Caco-2 (cell line): ENCODE measurements at regions of chr6 and their contacts with region 1.

Region 1: GRCh38 chr6:44655412-44656342 is 268.2 kb downstream of the CDC5L start:
- DNase-seq: peak; percentile 70 to 80
- H3K4me3 ChIP-seq: no peak overlapping the region
- H3K4me3 Mint-ChIP-seq: peak overlapping the region; percentile 30
- H3K27ac Mint-ChIP-seq: peak overlapping the region; percentile 8
- H3K4me1 ChIP-seq: 0 out of 2 replicates have a peak, but pooled peaks cover 4% of the 10 kb centered on the region
- H3K4me1 Mint-ChIP-seq: peaks cover 15% of the 10 kb centered on the region
- H3K27me3 ChIP-seq: no peaks in the 10 kb centered on the region
- H3K27me3 Mint-ChIP-seq: peaks cover 4% of the 10 kb centered on the region
- CTCF ChIP-seq: peak; percentile 86 to 92

Region 2: DNA sequence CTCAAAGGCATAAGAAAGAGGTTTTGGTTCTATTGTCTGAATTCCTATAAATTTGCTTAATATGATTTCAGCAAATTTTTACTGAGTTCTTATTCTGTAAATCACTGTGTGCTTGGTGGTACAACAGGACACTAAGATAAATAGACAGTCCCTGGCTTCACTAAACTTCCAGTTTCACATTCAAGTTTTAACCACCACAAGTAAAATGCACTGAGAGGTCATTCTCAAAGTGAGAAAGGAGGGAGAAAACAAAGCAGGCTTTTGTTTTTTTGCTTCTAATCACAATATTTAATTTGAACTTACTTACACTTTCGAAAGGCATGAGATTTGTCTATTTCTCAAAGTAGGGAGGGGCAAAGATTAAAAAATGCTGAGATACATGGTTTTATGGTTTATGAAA is 177.6 kb after region 1 on chr6:
- CTCF ChIA-PET with region 1: no interaction called
- POLR2A ChIA-PET with region 1: no interaction called
- intact Hi-C with region 1: no loop called
- DNase-seq: no peak
- H3K4me3 ChIP-seq: no peak overlapping the region
- H3K4me3 Mint-ChIP-seq: no peak overlapping the region
- H3K27ac Mint-ChIP-seq: no peak overlapping the region
- H3K4me1 ChIP-seq: no peaks in the 10 kb centered on the region
- H3K4me1 Mint-ChIP-seq: no peaks in the 10 kb centered on the region
- H3K27me3 ChIP-seq: no peaks in the 10 kb centered on the region
- H3K27me3 Mint-ChIP-seq: no peaks in the 10 kb centered on the region
- CTCF ChIP-seq: no peak

Region 3: GRCh38 chr6:45421709-45422502 is 766.2 kb after region 1 on chr6:
- CTCF ChIA-PET with region 1: interaction called, 8 read pairs
- POLR2A ChIA-PET with region 1: no interaction called
- intact Hi-C with region 1: loop called (anchors 1 kb)
- DNase-seq: peak; percentile 35 to 40
- H3K4me3 ChIP-seq: peak overlapping the region; percentile 46
- H3K4me3 Mint-ChIP-seq: peak overlapping the region; percentile 84
- H3K27ac Mint-ChIP-seq: no peak overlapping the region
- H3K4me1 ChIP-seq: peaks cover 7% of the 10 kb centered on the region; the same call in 1 of the 2 replicates
- H3K4me1 Mint-ChIP-seq: no peaks in the 10 kb centered on the region
- H3K27me3 ChIP-seq: peaks cover 13% of the 10 kb centered on the region
- H3K27me3 Mint-ChIP-seq: peaks cover 33% of the 10 kb centered on the region
- CTCF ChIP-seq: no peak

Region 4: DNA sequence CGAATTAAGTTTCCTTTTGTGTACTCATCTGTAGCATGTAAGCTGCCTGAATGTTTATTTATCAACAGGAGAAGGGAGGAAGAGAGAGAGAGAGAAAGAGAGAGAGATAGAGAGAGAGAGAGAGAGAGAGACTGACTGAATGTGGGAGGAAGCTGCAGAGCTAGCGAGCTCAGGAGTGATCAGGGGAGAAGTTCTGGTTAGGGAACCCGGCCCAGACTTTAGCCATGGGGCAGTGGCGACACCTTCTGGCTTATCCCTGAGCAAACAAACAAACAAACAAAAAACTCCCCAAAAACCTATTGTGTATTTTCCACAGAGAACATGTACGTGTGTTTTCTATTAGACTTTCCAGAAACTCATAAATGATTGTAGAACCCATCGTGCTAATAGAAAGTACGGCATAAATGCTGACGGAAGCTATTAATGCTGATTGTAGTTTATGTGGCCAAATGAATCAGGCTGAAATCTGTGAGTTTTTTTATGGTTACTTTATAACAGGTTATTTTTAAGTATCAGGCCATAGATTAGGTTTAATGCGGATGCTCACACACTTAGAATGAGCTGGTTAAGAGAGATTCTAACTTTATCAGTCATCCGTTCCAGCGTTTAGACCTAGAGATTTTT is 1267.2 kb after region 1 on chr6:
- CTCF ChIA-PET with region 1: no interaction called
- POLR2A ChIA-PET with region 1: no interaction called
- intact Hi-C with region 1: loop called (anchors 2 kb)
- DNase-seq: peak; percentile 43 to 64
- H3K4me3 ChIP-seq: no peak overlapping the region
- H3K4me3 Mint-ChIP-seq: no peak overlapping the region
- H3K27ac Mint-ChIP-seq: no peak overlapping the region
- H3K4me1 ChIP-seq: peaks cover 4% of the 10 kb centered on the region; the same call in 1 of the 2 replicates
- H3K4me1 Mint-ChIP-seq: peaks cover 6% of the 10 kb centered on the region
- H3K27me3 ChIP-seq: no peaks in the 10 kb centered on the region
- H3K27me3 Mint-ChIP-seq: no peaks in the 10 kb centered on the region
- CTCF ChIP-seq: peak; percentile 35 to 58